ENCODE measurements at regions of chr10 and their contacts with region 1.

Region 1: DNA sequence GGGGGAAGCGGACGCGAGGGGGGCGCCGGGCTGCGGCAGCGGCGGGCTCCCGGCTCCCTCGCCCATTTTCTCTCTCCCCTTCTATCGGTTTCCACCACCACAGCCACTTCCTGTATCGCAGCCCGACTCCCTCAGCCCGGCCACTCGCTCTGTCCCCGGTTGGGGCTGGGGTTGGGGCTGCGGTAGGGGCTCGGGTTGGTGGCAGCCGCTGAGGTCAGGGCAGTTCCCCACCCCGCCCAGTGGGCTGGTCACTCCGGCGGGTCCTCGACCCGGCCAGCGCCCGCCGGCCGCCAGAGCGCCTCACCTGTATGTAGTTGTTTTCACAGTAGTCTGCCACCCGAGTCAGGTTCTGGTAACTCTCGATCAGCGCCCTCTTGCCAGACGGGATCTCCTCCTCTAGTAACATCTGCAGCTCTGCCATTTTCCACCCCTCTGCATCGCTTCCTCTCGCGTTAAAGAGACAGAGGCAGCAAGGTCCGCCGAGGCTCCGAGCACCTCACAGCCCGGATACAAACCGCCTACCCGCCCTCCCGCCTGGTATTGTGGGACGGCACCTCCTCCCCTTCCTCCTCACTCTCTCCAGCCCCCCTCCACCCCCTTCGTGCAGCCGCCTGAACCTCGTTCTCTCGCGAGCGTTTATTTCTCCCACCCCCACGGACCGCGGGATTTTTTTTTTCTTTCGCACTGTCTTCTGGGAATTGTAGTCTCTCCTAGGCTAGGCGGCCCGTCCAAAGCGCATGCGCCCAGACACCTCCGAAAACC is at the start of gene ABI1:
- DNase-seq: peak; percentile 99
- H3K4me3 Mint-ChIP-seq: peak within 1 kb of the TSS; percentile 88
- H3K27ac Mint-ChIP-seq: peak within 1 kb of the TSS; percentile 98
- H3K4me1 Mint-ChIP-seq: peaks cover 32% of the 10 kb centered on the region
- H3K27me3 Mint-ChIP-seq: peaks cover 10% of the 10 kb centered on the region
- total RNA-seq, gene ABI1: 54.5 and 55.7 TPM in 2 replicates

Region 2: DNA sequence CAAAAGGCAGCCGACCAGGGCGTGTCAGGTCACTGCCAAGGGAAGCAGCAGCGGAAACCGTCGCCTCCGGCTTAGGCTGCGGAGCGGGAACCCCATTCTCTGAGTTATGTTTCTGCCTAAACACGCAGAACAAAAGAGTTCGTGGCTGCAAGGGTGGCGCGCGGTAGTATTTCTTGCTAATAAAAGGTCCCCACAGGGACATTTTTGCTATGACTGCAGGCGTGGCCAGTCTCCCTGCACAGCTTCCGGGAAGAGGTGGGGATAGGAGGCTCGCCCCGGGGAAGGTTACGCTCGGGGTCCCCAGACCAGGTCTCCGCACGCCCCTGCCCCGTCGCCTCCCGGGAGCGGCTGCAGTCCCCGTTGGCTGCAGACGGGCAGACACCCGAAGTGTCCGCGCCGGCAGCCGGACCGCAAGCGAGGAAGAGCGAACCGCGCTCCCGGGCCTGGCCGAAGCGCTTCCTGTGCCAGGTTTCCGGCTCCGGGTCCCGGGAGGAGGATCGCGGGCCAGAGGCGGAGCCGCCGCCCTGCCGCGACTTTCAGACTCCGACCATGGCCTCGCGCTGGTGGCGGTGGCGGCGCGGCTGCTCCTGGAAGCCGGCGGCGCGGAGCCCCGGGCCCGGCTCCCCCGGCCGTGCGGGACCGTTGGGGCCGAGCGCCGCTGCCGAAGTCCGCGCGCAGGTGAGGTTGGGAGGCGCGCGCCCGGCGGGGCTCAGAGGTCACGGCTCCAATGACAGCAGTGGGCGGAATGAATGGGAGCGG is 163.3 kb before region 1 on chr10 and contains the start of gene PDSS1:
- intact Hi-C with region 1: loop called (anchors 1 kb)
- DNase-seq: peak; percentile 92
- H3K4me3 Mint-ChIP-seq: peak within 1 kb of the TSS; percentile 99
- H3K27ac Mint-ChIP-seq: peak within 1 kb of the TSS; percentile 97
- H3K4me1 Mint-ChIP-seq: peaks cover 31% of the 10 kb centered on the region
- H3K27me3 Mint-ChIP-seq: no peaks in the 10 kb centered on the region
- total RNA-seq, gene PDSS1: 39.0 and 39.8 TPM in 2 replicates

Region 3: GRCh38 chr10:26805567-26806245 is 54.9 kb before region 1 on chr10:
- intact Hi-C with region 1: loop called (anchors 10 kb)
- DNase-seq: no peak
- H3K4me3 Mint-ChIP-seq: peak overlapping the region; percentile 14
- H3K27ac Mint-ChIP-seq: peak overlapping the region; percentile 7
- H3K4me1 Mint-ChIP-seq: peaks cover 43% of the 10 kb centered on the region
- H3K27me3 Mint-ChIP-seq: no peaks in the 10 kb centered on the region

Region 4: GRCh38 chr10:26839966-26840627 is 20.5 kb before region 1 on chr10:
- intact Hi-C with region 1: loop called (anchors 2 kb)
- DNase-seq: no peak
- H3K4me3 Mint-ChIP-seq: no peak overlapping the region
- H3K27ac Mint-ChIP-seq: peak overlapping the region; percentile 75
- H3K4me1 Mint-ChIP-seq: peaks cover 40% of the 10 kb centered on the region
- H3K27me3 Mint-ChIP-seq: no peaks in the 10 kb centered on the region

Region 5: GRCh38 chr10:26911811-26912461 is 51.3 kb after region 1 on chr10:
- intact Hi-C with region 1: no loop called
- DNase-seq: no peak
- H3K4me3 Mint-ChIP-seq: no peak overlapping the region
- H3K27ac Mint-ChIP-seq: no peak overlapping the region
- H3K4me1 Mint-ChIP-seq: no peaks in the 10 kb centered on the region
- H3K27me3 Mint-ChIP-seq: peaks cover 7% of the 10 kb centered on the region

Region 6: DNA sequence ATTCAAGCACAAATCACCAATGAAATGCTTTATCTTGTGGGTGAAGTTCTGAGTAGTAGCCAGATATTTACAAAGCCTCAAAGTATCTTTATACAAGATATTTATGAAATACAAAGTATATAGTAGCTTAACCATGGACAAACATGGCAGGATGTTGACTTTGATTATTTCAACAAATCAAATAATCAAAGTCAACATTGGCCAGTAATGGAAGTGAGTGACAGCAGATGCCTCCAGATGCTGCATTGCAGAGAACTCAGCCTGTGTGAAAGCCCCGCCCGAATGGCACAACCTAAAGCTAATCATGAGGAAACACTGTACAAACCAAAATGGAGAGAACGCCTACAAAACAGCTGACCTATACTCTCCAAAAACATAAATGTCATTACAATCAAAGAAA is 142.8 kb after region 1 on chr10:
- intact Hi-C with region 1: no loop called
- DNase-seq: peak; percentile 27
- H3K4me3 Mint-ChIP-seq: no peak overlapping the region
- H3K27ac Mint-ChIP-seq: no peak overlapping the region
- H3K4me1 Mint-ChIP-seq: peaks cover 4% of the 10 kb centered on the region
- H3K27me3 Mint-ChIP-seq: no peaks in the 10 kb centered on the region

Region 7: DNA sequence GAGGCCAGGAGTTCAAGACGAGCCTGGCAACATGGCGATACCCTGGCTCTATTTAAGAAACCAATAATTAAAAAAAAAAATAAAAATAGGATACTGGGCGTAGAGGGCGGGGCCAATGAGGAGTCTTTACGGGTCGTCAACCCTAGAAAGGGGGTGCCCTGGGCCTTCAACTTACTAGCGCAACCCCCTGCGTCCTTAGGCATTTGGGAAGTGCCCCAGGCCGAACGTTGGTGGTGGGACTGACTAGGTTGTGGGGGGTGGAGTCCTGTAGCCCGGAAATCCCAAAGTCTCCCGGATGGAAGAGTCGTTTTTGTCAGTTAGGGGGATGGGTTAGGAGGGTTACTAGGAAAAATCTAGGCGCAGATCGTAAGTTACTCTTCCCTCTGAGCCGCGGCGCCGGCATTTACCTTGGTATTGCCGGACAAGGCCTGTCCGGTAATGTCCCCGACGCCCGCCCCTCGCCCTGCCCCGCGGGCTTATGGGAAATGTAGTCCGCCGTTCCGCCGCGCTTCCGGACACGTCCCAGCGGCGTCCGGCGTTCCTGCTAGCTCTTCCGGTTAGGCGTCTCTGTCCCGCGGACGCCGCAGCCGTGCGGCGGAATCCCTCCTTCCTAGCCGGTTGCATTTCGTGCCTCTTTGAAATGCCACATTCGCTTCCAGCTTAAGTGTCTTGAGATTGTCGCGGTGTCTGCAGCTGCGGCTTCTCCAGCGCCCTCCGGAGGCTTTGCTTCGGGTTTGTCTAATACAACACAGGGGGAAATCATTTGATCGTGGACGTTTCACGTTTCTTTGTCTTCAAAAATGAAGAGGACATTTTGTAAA is 381.2 kb after region 1 on chr10:
- intact Hi-C with region 1: loop called (anchors 1 kb)
- DNase-seq: peak; percentile 97
- H3K4me3 Mint-ChIP-seq: peak overlapping the region; percentile 96
- H3K27ac Mint-ChIP-seq: peak overlapping the region; percentile 99
- H3K4me1 Mint-ChIP-seq: peaks cover 31% of the 10 kb centered on the region
- H3K27me3 Mint-ChIP-seq: no peaks in the 10 kb centered on the region

Measured in activated CD4-positive, alpha-beta T cell treated with anti-CD3 and anti-CD28 coated beads, Interleukin-2, amount 10 ng/mL, durations not matched to agents 24 days and 14 days (primary cell).